ENCODE measurements at regions of chr9 and their contacts with region 1.

Region 1: DNA sequence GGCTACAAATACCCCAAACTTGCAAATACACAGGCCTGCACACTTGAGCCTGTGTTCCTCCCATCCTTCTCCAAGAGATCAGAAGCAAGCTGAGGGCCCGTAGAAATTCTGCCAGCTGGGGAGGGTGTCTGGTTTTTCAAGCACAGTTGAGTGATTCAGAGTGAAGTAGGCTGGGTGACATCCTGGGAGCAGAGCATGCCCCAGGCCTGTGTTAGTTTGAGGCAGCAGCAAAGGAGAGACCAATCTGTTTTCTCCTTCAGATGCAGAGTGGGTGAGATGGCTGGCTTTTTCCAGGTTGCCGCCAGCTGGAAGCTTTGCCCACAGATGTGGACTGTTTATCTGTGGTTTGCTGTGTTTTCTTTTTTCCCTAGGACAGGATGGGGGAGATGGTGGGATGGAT is 63.1 kb downstream of the RCL1 start:
- DNase-seq: no peak
- ATAC-seq: peak; percentile 23 to 73 (median 60)
- H3K4me3 ChIP-seq: no peak overlapping the region
- H3K27ac ChIP-seq: peak overlapping the region in 2 of 12 donors; percentile 46 to 47
- H3K4me1 ChIP-seq: peaks cover 0 to 14% (median 0%) of the 10 kb centered on the region in 12 donors
- H3K27me3 ChIP-seq: no peaks in the 10 kb centered on the region
- CTCF ChIP-seq: no peak
- POLR2A ChIP-seq: no peak

Region 2: GRCh38 chr9:4769321-4770080 is 86.3 kb before region 1 on chr9:
- intact Hi-C with region 1: loop called in 1 of 10 experiments (anchors 5 kb)
- DNase-seq: peak in 1 of 5 donors; percentile 32
- ATAC-seq: peak in 1 of 4 donors; percentile 55
- H3K4me3 ChIP-seq: no peak overlapping the region
- H3K27ac ChIP-seq: no peak overlapping the region
- H3K4me1 ChIP-seq: peaks cover 0 to 6% (median 0%) of the 10 kb centered on the region in 12 donors
- H3K27me3 ChIP-seq: no peaks in the 10 kb centered on the region
- CTCF ChIP-seq: no peak
- POLR2A ChIP-seq: no peak

Region 3: GRCh38 chr9:4923580-4924544 is 68.0 kb after region 1 on chr9:
- intact Hi-C with region 1: loop called in 1 of 10 experiments (anchors 10 kb)
- DNase-seq: no peak
- ATAC-seq: peak; percentile 32 to 66 (median 52)
- H3K4me3 ChIP-seq: no peak overlapping the region
- H3K27ac ChIP-seq: peak overlapping the region in 6 of 12 donors; percentile 4 to 57 (median 22)
- H3K4me1 ChIP-seq: peaks cover 0 to 23% (median 7%) of the 10 kb centered on the region in 12 donors
- H3K27me3 ChIP-seq: no peaks in the 10 kb centered on the region
- CTCF ChIP-seq: peak in 7 of 12 donors; percentile 13 to 44 (median 23)
- POLR2A ChIP-seq: no peak

Region 4: DNA sequence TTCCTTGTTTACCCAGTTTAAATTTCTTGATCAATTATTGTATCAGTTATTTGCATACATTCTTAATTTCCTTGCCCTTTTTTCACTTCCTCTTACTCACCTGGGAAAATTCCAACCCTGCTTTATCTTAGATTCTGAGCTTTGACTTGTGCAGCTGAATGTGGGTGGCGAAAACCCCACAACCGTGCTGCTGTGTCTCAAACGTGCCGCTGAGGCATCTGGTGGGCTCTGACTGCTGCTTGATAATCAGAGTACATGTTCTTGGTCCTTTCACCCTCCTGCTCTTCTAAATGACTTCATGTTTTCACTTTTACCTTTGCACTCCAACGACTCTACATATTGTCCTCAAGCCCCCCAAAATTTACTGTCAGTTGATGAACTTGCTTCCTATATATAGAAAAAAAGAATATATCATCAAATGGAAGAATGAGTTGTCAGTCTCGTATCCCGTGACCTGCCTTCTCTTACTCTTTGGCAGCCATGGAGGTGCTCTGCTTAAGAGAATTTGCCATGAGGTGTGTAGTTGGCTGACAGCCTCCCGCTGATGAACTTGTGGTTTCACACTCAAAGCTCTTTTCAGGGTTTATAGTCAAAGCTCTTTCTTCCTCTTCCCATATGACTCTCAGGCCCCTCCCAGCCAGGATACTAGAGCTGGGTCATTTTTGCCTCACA is 115.3 kb after region 1 on chr9:
- intact Hi-C with region 1: loop called in 1 of 10 experiments (anchors 10 kb)
- DNase-seq: no peak
- ATAC-seq: no peak
- H3K4me3 ChIP-seq: no peak overlapping the region
- H3K27ac ChIP-seq: no peak overlapping the region
- H3K4me1 ChIP-seq: peaks cover 0 to 23% (median 0%) of the 10 kb centered on the region in 12 donors
- H3K27me3 ChIP-seq: no peaks in the 10 kb centered on the region
- CTCF ChIP-seq: no peak
- POLR2A ChIP-seq: no peak

Measured in heart left ventricle (tissue), 16 donors.